IMR-90 (cell line): ENCODE measurements at regions of chr6 and their contacts with region 1.

Region 1: GRCh38 chr6:153131037-153131981 is at the start of gene RGS17:
- DNase-seq: peak; percentile 73
- ATAC-seq: peak; percentile 85
- H3K4me3 ChIP-seq: peak within 1 kb of the TSS; percentile 62
- H3K27ac ChIP-seq: peak within 1 kb of the TSS; percentile 43
- H3K4me1 ChIP-seq: no peaks in the 10 kb centered on the region; the same call in 1 of the 2 replicates
- H3K27me3 ChIP-seq: peaks cover 2% of the 10 kb centered on the region; the same call in 1 of the 2 replicates
- CTCF ChIP-seq: no peak
- POLR2A ChIP-seq: no peak
- RAD21 ChIP-seq: no peak
- total RNA-seq, gene RGS17: 1.4 and 1.7 TPM in 2 replicates

Region 2: GRCh38 chr6:152232501-152233151 is 898.7 kb before region 1 on chr6:
- CTCF ChIA-PET with region 1: no interaction called
- POLR2A ChIA-PET with region 1: no interaction called
- dilution Hi-C with region 1: no loop called
- in situ Hi-C with region 1: no loop called
- intact Hi-C with region 1: no loop called
- DNase-seq: peak; percentile 67
- ATAC-seq: peak; percentile 81
- H3K4me3 ChIP-seq: no peak overlapping the region
- H3K27ac ChIP-seq: peak overlapping the region; percentile 2; the same call in 1 of the 2 replicates
- H3K4me1 ChIP-seq: no peaks in the 10 kb centered on the region; the same call in 1 of the 2 replicates
- H3K27me3 ChIP-seq: no peaks in the 10 kb centered on the region
- CTCF ChIP-seq: 0 out of 2 replicates have a peak, but pooled peaks have one; percentile 17
- POLR2A ChIP-seq: no peak
- RAD21 ChIP-seq: no peak

Region 3: GRCh38 chr6:153167061-153167891 is 36.0 kb after region 1 on chr6:
- CTCF ChIA-PET with region 1: no interaction called
- POLR2A ChIA-PET with region 1: no interaction called
- dilution Hi-C with region 1: no loop called
- in situ Hi-C with region 1: no loop called
- intact Hi-C with region 1: loop called (anchors 2 kb)
- DNase-seq: peak; percentile 90
- ATAC-seq: peak; percentile 74
- H3K4me3 ChIP-seq: peak overlapping the region; percentile 30; the same call in 1 of the 2 replicates
- H3K27ac ChIP-seq: peak overlapping the region; percentile 89
- H3K4me1 ChIP-seq: peaks cover 9% of the 10 kb centered on the region
- H3K27me3 ChIP-seq: no peaks in the 10 kb centered on the region
- CTCF ChIP-seq: no peak
- POLR2A ChIP-seq: no peak
- RAD21 ChIP-seq: no peak

Region 4: GRCh38 chr6:153312641-153313040 is 181.3 kb after region 1 on chr6:
- CTCF ChIA-PET with region 1: no interaction called
- POLR2A ChIA-PET with region 1: no interaction called
- dilution Hi-C with region 1: no loop called
- in situ Hi-C with region 1: no loop called
- intact Hi-C with region 1: loop called (anchors 1 kb)
- DNase-seq: peak; percentile 35
- ATAC-seq: peak; percentile 61; the same call in 1 of the 2 replicates
- H3K4me3 ChIP-seq: no peak overlapping the region
- H3K27ac ChIP-seq: no peak overlapping the region
- H3K4me1 ChIP-seq: no peaks in the 10 kb centered on the region
- H3K27me3 ChIP-seq: no peaks in the 10 kb centered on the region
- CTCF ChIP-seq: peak; percentile 42
- POLR2A ChIP-seq: no peak
- RAD21 ChIP-seq: peak; percentile 50

Region 5: GRCh38 chr6:153511896-153512496 is 380.7 kb after region 1 on chr6:
- CTCF ChIA-PET with region 1: no interaction called
- POLR2A ChIA-PET with region 1: no interaction called
- dilution Hi-C with region 1: no loop called
- in situ Hi-C with region 1: no loop called
- intact Hi-C with region 1: loop called (anchors 10 kb)
- DNase-seq: peak; percentile 3
- ATAC-seq: peak; percentile 82; the same call in 1 of the 2 replicates
- H3K4me3 ChIP-seq: no peak overlapping the region
- H3K27ac ChIP-seq: no peak overlapping the region
- H3K4me1 ChIP-seq: no peaks in the 10 kb centered on the region
- H3K27me3 ChIP-seq: no peaks in the 10 kb centered on the region
- CTCF ChIP-seq: peak; percentile 57
- POLR2A ChIP-seq: no peak
- RAD21 ChIP-seq: peak; percentile 53

Region 6: GRCh38 chr6:154928325-154928922 is 1797.1 kb after region 1 on chr6:
- CTCF ChIA-PET with region 1: no interaction called
- POLR2A ChIA-PET with region 1: no interaction called
- dilution Hi-C with region 1: no loop called
- in situ Hi-C with region 1: no loop called
- intact Hi-C with region 1: no loop called
- DNase-seq: peak; percentile 69
- ATAC-seq: peak; percentile 77
- H3K4me3 ChIP-seq: no peak overlapping the region
- H3K27ac ChIP-seq: no peak overlapping the region
- H3K4me1 ChIP-seq: peaks cover 16% of the 10 kb centered on the region
- H3K27me3 ChIP-seq: no peaks in the 10 kb centered on the region
- CTCF ChIP-seq: peak; percentile 88
- POLR2A ChIP-seq: 0 out of 2 replicates have a peak, but pooled peaks have one; percentile 34
- RAD21 ChIP-seq: peak; percentile 97